K562 (cell line): ENCODE measurements at regions of chr7 and their contacts with region 1.

Region 1: GRCh38 chr7:128883622-128884501 is 21.2 kb downstream of the ATP6V1F start:
- DNase-seq: peak; percentile 92 to 97 (median 96)
- ATAC-seq: peak; percentile 79
- H3K4me3 ChIP-seq: no peak overlapping the region
- H3K27ac ChIP-seq: no peak overlapping the region
- H3K4me1 ChIP-seq: peaks cover 0 to 54% of the 10 kb centered on the region in 2 experiments; a peak in 3 of 5 replicates
- H3K27me3 ChIP-seq: peaks cover 2 to 19% of the 10 kb centered on the region in 2 experiments; a peak in 4 of 5 replicates
- CTCF ChIP-seq: peak; percentile 97 to 99 (median 97)
- EP300 ChIP-seq: no peak
- POLR2A ChIP-seq: no peak
- RAD21 ChIP-seq: peak; percentile 88 to 93

Region 2: GRCh38 chr7:128672912-128673517 is 210.8 kb before region 1 on chr7:
- CTCF ChIA-PET with region 1: no interaction called
- POLR2A ChIA-PET with region 1: no interaction called
- in situ Hi-C with region 1: loop called (anchors 5 kb)
- intact Hi-C with region 1: loop called (anchors 2 kb)
- DNase-seq: peak; percentile 42 to 68 (median 58)
- ATAC-seq: peak; percentile 94
- H3K4me3 ChIP-seq: no peak overlapping the region
- H3K27ac ChIP-seq: no peak overlapping the region
- H3K4me1 ChIP-seq: peaks cover 0 to 6% of the 10 kb centered on the region in 2 experiments; a peak in 1 of 5 replicates
- H3K27me3 ChIP-seq: peaks cover 10 to 45% of the 10 kb centered on the region in 2 experiments; a peak in 4 of 5 replicates
- CTCF ChIP-seq: peak; percentile 73 to 90 (median 81)
- EP300 ChIP-seq: no peak
- POLR2A ChIP-seq: no peak
- RAD21 ChIP-seq: peak in 1 of 2 experiments; percentile 65; a peak in 2 of 4 replicates

Region 3: DNA sequence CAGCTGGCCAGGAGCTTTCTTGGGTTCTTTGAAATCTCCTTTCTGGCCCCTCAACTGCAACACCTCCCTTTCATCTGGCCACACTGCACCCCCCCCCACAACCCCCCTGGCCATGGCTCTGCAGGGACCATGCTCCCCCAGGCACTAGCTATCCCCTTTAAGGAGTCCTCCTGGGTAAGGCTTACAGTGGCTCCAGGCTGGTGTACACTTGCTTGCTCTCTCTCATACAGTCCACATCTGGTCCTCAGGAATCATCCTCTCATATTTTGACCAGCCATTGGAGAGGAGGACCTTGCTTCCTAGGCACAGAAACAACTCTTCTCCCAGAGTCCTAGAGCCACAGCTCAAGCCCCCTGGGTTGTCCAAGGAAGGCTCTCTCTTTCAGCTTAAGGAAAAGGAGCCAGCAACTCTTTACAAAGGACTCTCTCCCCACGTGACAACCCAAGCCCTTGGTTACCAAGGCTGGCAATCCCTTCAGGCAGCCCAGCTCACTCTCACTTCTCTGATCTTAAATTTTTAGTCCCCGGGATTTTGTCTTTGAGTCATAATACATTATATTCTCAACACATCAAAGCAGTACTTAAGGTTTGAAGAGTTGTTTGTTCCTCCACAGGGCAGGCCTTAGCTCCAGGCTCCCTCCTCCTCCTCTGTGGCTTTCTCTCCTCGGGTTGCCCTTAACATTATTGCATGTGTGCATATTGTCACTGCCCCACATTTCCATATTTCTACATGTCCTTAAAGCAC is 201.9 kb before region 1 on chr7:
- CTCF ChIA-PET with region 1: no interaction called
- POLR2A ChIA-PET with region 1: interaction called, 3 read pairs
- in situ Hi-C with region 1: loop called (anchors 5 kb)
- intact Hi-C with region 1: no loop called
- DNase-seq: no peak
- ATAC-seq: peak; percentile 18; the same call in 1 of the 3 replicates
- H3K4me3 ChIP-seq: no peak overlapping the region
- H3K27ac ChIP-seq: no peak overlapping the region
- H3K4me1 ChIP-seq: peaks cover 5% of the 10 kb centered on the region in 2 experiments; a peak in 3 of 5 replicates
- H3K27me3 ChIP-seq: peaks cover 2 to 7% of the 10 kb centered on the region in 2 experiments; a peak in 2 of 5 replicates
- CTCF ChIP-seq: no peak
- EP300 ChIP-seq: no peak
- POLR2A ChIP-seq: no peak
- RAD21 ChIP-seq: no peak

Region 4: GRCh38 chr7:128791121-128791961 is 92.5 kb before region 1 on chr7:
- CTCF ChIA-PET with region 1: interaction called, 3 read pairs
- POLR2A ChIA-PET with region 1: no interaction called
- in situ Hi-C with region 1: no loop called
- intact Hi-C with region 1: loop called (anchors 5 kb)
- DNase-seq: peak; percentile 94 to 100 (median 98)
- ATAC-seq: peak; percentile 94
- H3K4me3 ChIP-seq: peak overlapping the region; percentile 69
- H3K27ac ChIP-seq: peak overlapping the region; percentile 65
- H3K4me1 ChIP-seq: peaks cover 18 to 46% of the 10 kb centered on the region in 2 experiments
- H3K27me3 ChIP-seq: no peaks in the 10 kb centered on the region
- CTCF ChIP-seq: no peak
- EP300 ChIP-seq: no peak
- POLR2A ChIP-seq: peak; percentile 82
- RAD21 ChIP-seq: 0 out of 4 replicates have a peak, but pooled peaks of 1 of the 2 experiments have one; percentile 13

Region 5: GRCh38 chr7:128841921-128842651 is 41.8 kb before region 1 on chr7:
- CTCF ChIA-PET with region 1: interaction called, 8 read pairs
- POLR2A ChIA-PET with region 1: no interaction called
- in situ Hi-C with region 1: no loop called
- intact Hi-C with region 1: loop called (anchors 2 kb)
- DNase-seq: peak; percentile 80 to 92 (median 90)
- ATAC-seq: peak; percentile 72
- H3K4me3 ChIP-seq: no peak overlapping the region
- H3K27ac ChIP-seq: no peak overlapping the region
- H3K4me1 ChIP-seq: peaks cover 0 to 56% of the 10 kb centered on the region in 2 experiments; a peak in 2 of 5 replicates
- H3K27me3 ChIP-seq: no peaks in the 10 kb centered on the region
- CTCF ChIP-seq: peak; percentile 65 to 85 (median 79)
- EP300 ChIP-seq: no peak
- POLR2A ChIP-seq: 0 out of 2 replicates have a peak, but pooled peaks have one; percentile 31
- RAD21 ChIP-seq: peak; percentile 27 to 36; a peak in 2 of 4 replicates

Region 6: GRCh38 chr7:128862571-128863432 is 21.1 kb before region 1 on chr7 and contains the start of gene ATP6V1F:
- CTCF ChIA-PET with region 1: interaction called, 20 read pairs
- POLR2A ChIA-PET with region 1: interaction called, 9 read pairs
- in situ Hi-C with region 1: no loop called
- intact Hi-C with region 1: loop called (anchors 1 kb)
- DNase-seq: peak; percentile 100
- ATAC-seq: peak; percentile 73
- H3K4me3 ChIP-seq: peak within 1 kb of the TSS; percentile 71
- H3K27ac ChIP-seq: peak within 1 kb of the TSS; percentile 87
- H3K4me1 ChIP-seq: peaks cover 38 to 68% of the 10 kb centered on the region in 2 experiments
- H3K27me3 ChIP-seq: no peaks in the 10 kb centered on the region
- CTCF ChIP-seq: peak in 1 of 3 experiments; percentile 12; a peak in 2 of 6 replicates
- EP300 ChIP-seq: no peak
- POLR2A ChIP-seq: peak; percentile 90
- RAD21 ChIP-seq: no peak
- polyA plus RNA-seq, gene ATP6V1F: 733 to 1,123 TPM